ENCODE measurements at regions of chr1 and their contacts with region 1.

Region 1: DNA sequence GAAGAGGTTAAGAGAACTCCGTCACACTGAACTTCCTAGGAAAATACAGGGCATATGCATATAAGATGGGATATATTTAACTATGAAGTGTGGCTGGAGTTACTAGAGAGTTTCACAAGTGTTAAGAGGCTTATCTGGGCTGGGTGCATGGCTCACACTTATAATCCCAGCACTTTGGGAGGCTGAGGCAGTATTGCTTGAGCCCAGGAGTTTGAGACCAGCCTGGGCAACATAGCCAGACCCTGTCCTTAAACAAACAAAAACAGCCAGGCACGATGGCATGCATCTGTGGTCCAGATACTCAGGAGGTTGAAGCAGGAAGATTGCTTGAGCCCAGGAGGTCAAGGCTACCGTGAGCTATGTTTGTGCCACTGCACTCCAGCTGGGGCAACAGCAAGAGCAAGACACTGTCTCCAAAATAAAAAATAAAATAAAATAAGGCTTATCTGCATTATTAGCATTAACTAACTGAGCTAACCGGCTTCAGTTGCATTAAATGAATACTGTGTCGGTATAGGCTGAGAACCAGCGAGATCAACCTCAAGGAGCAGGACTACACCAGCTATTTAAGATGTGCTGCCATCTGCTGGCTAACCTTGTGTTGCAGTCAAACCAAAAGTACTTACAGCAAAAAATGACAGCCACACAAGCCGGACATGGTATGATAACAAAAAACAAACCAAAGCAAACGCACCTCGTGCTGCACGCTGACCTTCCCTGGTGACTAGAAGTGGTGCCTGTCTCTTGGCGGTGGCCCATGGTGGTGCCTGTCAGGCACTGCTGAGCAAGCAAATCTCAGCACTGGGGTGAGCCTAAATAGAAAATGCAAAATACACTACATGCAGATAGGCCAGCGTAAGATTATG is 19.7 kb upstream of the RBBP5 start:
- DNase-seq: peak; percentile 88
- ATAC-seq: peak; percentile 92
- H3K4me3 Mint-ChIP-seq: no peak overlapping the region
- H3K27ac Mint-ChIP-seq: no peak overlapping the region
- H3K4me1 Mint-ChIP-seq: peaks cover 6% of the 10 kb centered on the region
- H3K27me3 Mint-ChIP-seq: no peaks in the 10 kb centered on the region

Region 2: GRCh38 chr1:205121660-205122488 is 19.6 kb before region 1 on chr1 and contains the start of gene RBBP5:
- CTCF ChIA-PET with region 1: interaction called, 16 read pairs
- DNase-seq: peak; percentile 97
- ATAC-seq: peak; percentile 96
- H3K4me3 Mint-ChIP-seq: peak within 1 kb of the TSS; percentile 98
- H3K27ac Mint-ChIP-seq: peak within 1 kb of the TSS; percentile 96
- H3K4me1 Mint-ChIP-seq: peaks cover 40% of the 10 kb centered on the region
- H3K27me3 Mint-ChIP-seq: no peaks in the 10 kb centered on the region
- total RNA-seq, gene RBBP5: 22.8 to 23.0 TPM

Region 3: DNA sequence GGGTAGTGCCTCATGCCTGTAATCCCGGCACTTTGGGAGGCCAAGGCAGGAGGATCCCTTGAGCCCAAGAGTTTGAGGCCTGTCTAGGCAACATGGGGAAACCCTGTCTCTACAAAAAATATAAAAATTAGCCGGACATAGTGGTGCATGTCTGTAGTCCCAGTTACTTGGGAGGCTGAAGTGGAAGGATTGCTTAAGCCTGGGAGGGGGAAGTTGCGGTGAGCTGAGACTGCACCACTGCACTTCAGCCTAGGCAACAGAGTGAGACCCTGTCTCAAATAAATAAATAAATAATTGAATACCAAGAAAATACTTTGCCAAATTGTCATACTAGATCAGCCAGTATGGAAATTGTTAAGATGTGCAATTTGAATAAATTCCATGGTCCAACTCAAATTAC is 13.8 kb before region 1 on chr1:
- CTCF ChIA-PET with region 1: interaction called, 16 read pairs
- DNase-seq: no peak
- ATAC-seq: no peak
- H3K4me3 Mint-ChIP-seq: no peak overlapping the region
- H3K27ac Mint-ChIP-seq: no peak overlapping the region
- H3K4me1 Mint-ChIP-seq: peaks cover 6% of the 10 kb centered on the region
- H3K27me3 Mint-ChIP-seq: no peaks in the 10 kb centered on the region

Region 4: DNA sequence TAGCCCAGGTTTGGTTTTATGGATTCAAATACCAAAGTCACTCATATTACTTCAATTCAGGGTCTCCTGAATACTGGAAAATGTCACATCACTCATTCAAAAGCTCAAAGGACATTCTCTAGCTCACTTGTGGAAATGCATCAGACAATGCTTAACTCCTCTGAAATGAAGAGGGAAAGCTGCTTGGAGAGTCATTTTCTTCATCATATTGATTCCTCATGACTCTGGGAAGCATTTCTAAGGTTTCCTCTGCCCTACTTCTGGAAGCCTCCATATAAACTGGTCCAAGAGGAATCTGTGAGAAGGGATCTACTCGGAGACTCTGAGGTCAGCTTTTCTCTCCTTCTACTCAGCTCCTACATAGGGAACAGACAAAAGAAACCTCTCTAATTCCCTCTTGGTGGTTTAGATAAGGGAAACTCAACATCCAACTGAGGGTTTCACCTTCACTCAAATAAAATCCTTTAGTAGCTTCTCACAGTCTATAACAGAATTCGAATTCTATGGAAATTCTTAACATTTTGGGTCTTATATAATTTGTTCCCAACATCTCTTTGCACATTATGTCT is 16.7 kb after region 1 on chr1:
- CTCF ChIA-PET with region 1: interaction called, 16 read pairs
- DNase-seq: no peak
- ATAC-seq: no peak
- H3K4me3 Mint-ChIP-seq: no peak overlapping the region
- H3K27ac Mint-ChIP-seq: no peak overlapping the region
- H3K4me1 Mint-ChIP-seq: peaks cover 15% of the 10 kb centered on the region
- H3K27me3 Mint-ChIP-seq: no peaks in the 10 kb centered on the region

Region 5: DNA sequence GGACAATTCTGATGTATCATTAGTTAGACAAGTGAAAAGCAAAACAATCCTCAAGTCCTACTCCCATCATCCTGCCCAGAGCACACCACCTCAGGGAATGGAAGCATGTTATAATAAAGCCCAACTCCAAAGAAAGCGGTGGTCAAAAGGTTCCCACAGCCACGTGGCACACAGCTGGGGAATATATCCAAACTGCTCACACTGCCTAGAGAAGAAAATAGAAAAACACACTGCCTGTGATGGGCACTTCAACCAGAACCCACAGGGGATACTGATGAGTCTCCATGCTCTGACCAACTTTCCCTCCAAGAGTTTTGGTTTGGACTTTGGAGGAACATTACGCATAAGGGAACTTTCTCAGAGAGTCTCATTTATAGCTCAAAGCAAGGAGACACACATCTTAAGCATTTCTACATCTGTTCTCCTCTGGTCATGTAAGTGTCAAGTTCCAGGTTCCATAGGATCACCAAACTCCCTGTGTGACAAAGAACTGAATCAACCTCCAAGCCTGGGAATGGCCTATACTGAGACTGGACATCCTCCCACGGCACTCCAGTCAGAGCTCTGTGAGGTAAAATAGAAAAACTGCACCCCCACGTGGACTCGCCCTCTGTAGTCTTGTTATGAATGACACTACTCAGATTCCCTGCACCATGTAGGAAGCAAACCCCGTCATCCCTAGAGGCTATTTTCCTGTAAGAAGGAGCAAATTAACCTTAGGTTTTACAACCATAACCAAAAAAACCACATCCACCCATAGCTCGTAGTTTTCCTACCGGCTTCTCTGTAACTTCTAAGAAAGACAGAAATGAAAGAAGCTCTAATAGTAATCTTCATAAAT is 57.8 kb after region 1 on chr1:
- CTCF ChIA-PET with region 1: interaction called, 14 read pairs
- DNase-seq: peak; percentile 65
- ATAC-seq: peak; percentile 82
- H3K4me3 Mint-ChIP-seq: peak overlapping the region; percentile 57
- H3K27ac Mint-ChIP-seq: peak overlapping the region; percentile 59
- H3K4me1 Mint-ChIP-seq: peaks cover 41% of the 10 kb centered on the region
- H3K27me3 Mint-ChIP-seq: no peaks in the 10 kb centered on the region

Region 6: DNA sequence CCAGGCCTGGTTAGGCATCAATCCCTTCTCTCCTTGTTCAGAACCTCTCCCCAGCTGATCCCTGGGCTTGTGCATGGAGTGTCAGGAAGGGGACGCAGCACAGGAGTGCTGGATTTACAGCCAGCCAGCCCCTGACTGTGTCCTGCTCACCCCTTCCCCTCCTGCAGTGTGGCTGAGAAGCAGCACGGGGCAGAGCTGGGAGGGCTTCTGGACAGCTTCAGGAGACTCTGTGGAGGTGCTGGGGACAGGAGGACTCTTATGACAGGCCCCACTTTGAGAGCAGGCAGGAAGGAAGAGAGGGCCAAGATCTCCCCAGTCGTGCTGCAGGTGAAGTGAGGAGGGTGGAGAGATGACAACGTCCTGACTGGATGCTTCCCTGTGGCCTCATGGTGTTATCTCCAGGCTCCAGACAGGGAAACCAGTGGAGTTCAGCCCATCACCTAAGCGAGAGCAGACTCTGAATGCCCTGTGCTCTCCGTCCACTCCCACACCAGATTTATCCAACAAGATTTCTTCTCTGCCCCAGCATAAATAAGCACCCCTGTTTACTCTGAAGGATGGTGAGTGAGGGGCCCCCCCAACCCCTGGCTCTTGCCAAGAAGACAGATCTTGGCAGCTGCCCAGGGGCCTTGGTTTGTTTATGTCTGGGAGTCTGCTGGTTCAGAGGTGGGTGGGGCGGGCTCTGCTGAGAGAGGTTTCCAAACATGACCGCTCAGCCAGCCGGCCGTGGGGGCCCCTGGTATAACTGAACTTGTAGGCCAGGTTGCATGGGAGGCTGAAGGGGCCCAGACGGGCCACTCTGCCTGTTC is 107.5 kb after region 1 on chr1:
- CTCF ChIA-PET with region 1: no interaction called
- DNase-seq: no peak
- ATAC-seq: no peak
- H3K4me3 Mint-ChIP-seq: no peak overlapping the region
- H3K27ac Mint-ChIP-seq: no peak overlapping the region
- H3K4me1 Mint-ChIP-seq: peaks cover 19% of the 10 kb centered on the region
- H3K27me3 Mint-ChIP-seq: peaks cover 2% of the 10 kb centered on the region